Mammary epithelial cell (primary cell): ENCODE measurements at regions of chr4 and their contacts with region 1.

Region 1: GRCh38 chr4:174423257-174423944 is 98.9 kb downstream of the HPGD start:
- DNase-seq: peak; percentile 95
- H3K4me3 ChIP-seq: peak overlapping the region in 2 of 3 experiments; percentile 11 to 20
- H3K27ac ChIP-seq: peak overlapping the region; percentile 64
- H3K4me1 ChIP-seq: peaks cover 14% of the 10 kb centered on the region
- H3K27me3 ChIP-seq: peaks cover 2% of the 10 kb centered on the region
- CTCF ChIP-seq: no peak

Region 2: DNA sequence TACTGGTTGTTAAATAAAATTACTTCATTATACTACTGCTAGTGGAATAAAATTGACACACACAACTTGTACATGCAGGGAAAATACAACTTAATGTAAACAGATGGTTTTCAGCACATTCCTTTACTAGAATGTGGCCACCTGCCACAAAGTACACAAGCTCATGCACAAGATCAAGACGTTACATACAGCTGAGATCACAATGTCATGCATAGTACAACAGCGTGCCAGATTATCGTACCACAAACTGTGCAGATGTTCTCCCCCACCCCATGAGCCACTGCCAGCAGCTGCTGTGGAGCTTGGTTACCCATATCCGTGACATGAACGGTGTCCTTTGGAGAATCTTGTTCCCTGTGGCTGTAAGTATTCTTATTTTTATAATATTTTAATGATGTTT is 167.6 kb before region 1 on chr4:
- CTCF ChIA-PET with region 1: no interaction called
- dilution Hi-C with region 1: no loop called
- in situ Hi-C with region 1: no loop called
- intact Hi-C with region 1: no loop called
- DNase-seq: no peak
- H3K4me3 ChIP-seq: no peak overlapping the region
- H3K27ac ChIP-seq: no peak overlapping the region
- H3K4me1 ChIP-seq: no peaks in the 10 kb centered on the region
- H3K27me3 ChIP-seq: no peaks in the 10 kb centered on the region
- CTCF ChIP-seq: no peak

Region 3: GRCh38 chr4:174437324-174437723 is 13.9 kb after region 1 on chr4:
- CTCF ChIA-PET with region 1: interaction called, 14 read pairs
- dilution Hi-C with region 1: no loop called
- in situ Hi-C with region 1: no loop called
- intact Hi-C with region 1: no loop called
- DNase-seq: peak; percentile 89
- H3K4me3 ChIP-seq: no peak overlapping the region
- H3K27ac ChIP-seq: no peak overlapping the region
- H3K4me1 ChIP-seq: peaks cover 4% of the 10 kb centered on the region
- H3K27me3 ChIP-seq: no peaks in the 10 kb centered on the region
- CTCF ChIP-seq: no peak